Gastrocnemius medialis (tissue), 4 donors: ENCODE measurements at regions of chr1 and their contacts with region 1.

Region 1: GRCh38 chr1:201114236-201115131 is 2.3 kb upstream of the CACNA1S start:
- DNase-seq: peak; percentile 85 to 94
- ATAC-seq: peak; percentile 85 to 92
- H3K4me3 ChIP-seq: peak overlapping the region; percentile 59 to 84 (median 67)
- H3K27ac ChIP-seq: peak overlapping the region; percentile 89 to 98 (median 96)
- H3K4me1 ChIP-seq: peaks cover 38 to 47% of the 10 kb centered on the region in 2 donors
- H3K27me3 ChIP-seq: no peaks in the 10 kb centered on the region
- CTCF ChIP-seq: peak; percentile 86 to 97 (median 93)
- POLR2A ChIP-seq: peak; percentile 12 to 58

Region 2: GRCh38 chr1:201085916-201086735 is 28.4 kb before region 1 on chr1:
- in situ Hi-C with region 1: loop called in 2 of 4 experiments (anchors 5 kb)
- intact Hi-C with region 1: loop called (anchors 1 kb)
- DNase-seq: peak in 1 of 2 donors; percentile 82
- ATAC-seq: peak; percentile 62 to 87
- H3K4me3 ChIP-seq: no peak overlapping the region
- H3K27ac ChIP-seq: peak overlapping the region; percentile 14 to 98 (median 96)
- H3K4me1 ChIP-seq: peaks cover 15 to 20% of the 10 kb centered on the region in 2 donors
- H3K27me3 ChIP-seq: no peaks in the 10 kb centered on the region
- CTCF ChIP-seq: peak; percentile 82 to 87 (median 85)
- POLR2A ChIP-seq: no peak

Region 3: GRCh38 chr1:201096035-201096434 is 18.4 kb before region 1 on chr1:
- in situ Hi-C with region 1: no loop called
- intact Hi-C with region 1: loop called (anchors 1 kb)
- DNase-seq: peak; percentile 88 to 98
- ATAC-seq: peak; percentile 60 to 68
- H3K4me3 ChIP-seq: no peak overlapping the region
- H3K27ac ChIP-seq: peak overlapping the region; percentile 89 to 98 (median 96)
- H3K4me1 ChIP-seq: peaks cover 76 to 88% of the 10 kb centered on the region in 2 donors
- H3K27me3 ChIP-seq: no peaks in the 10 kb centered on the region
- CTCF ChIP-seq: no peak
- POLR2A ChIP-seq: peak; percentile 11 to 23

Region 4: GRCh38 chr1:201154389-201155165 is 40.1 kb after region 1 on chr1 and contains the start of gene TMEM9:
- in situ Hi-C with region 1: no loop called
- intact Hi-C with region 1: no loop called
- DNase-seq: peak; percentile 93 to 96
- ATAC-seq: peak; percentile 94 to 96
- H3K4me3 ChIP-seq: peak within 1 kb of the TSS; percentile 70 to 84 (median 77)
- H3K27ac ChIP-seq: peak within 1 kb of the TSS; percentile 73 to 78 (median 76)
- H3K4me1 ChIP-seq: peaks cover 19 to 33% of the 10 kb centered on the region in 2 donors
- H3K27me3 ChIP-seq: no peaks in the 10 kb centered on the region
- CTCF ChIP-seq: no peak
- POLR2A ChIP-seq: no peak
- total RNA-seq, gene TMEM9: 11.9 to 38.8 (median 13.0) TPM